Prostate gland (tissue), 2 donors: ENCODE measurements at regions of chr3 and their contacts with region 1.

Region 1: DNA sequence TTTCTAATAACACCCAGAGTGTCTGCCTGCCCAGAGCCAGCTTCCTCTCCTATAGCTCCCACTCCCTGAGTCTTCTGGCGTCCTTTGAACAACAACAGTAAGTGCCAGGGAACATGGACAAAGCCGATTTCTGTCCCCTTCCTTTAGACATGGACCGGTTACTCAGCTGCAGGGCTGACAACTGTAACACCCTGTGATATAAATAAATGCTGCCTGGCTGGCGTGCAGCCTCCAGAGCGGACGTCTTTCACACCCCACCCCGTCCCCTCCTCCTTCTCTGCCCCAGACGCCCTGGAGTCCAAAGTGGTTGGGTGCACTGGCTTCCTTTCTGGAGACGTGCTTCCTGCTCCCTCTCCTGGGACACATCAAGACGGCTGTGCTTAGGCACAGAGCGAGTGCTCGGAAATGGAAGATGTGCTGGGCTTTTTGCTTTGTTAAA is 281.9 kb upstream of the LRRFIP2 start:
- DNase-seq: peak; percentile 35
- H3K4me3 ChIP-seq: no peak overlapping the region
- H3K27ac ChIP-seq: peak overlapping the region; percentile 3 to 7
- H3K4me1 ChIP-seq: no peaks in the 10 kb centered on the region
- H3K27me3 ChIP-seq: no peaks in the 10 kb centered on the region
- CTCF ChIP-seq: peak in 1 of 4 experiments; percentile 9
- POLR2A ChIP-seq: no peak

Region 2: DNA sequence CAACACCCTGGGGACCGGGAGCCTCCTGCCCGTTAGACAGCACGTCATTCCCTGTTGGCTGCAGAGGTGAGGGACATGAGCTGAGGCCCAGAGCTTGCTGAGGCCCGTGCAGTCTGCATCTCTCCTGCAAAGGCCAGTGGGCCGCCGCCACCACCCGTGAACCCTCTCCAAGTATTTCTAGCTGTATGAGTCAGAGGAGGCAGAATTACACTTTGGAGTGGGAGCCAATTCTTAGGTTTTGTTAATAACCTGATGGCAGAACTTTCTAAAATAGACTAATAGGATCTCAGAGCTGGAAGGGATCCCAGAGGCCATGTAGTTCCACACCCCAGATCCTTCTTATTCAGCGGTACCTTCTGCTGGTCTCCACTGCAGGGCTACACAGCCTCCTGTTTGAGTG is 70.2 kb after region 1 on chr3:
- intact Hi-C with region 1: loop called (anchors 5 kb)
- DNase-seq: peak; percentile 50
- H3K4me3 ChIP-seq: no peak overlapping the region
- H3K27ac ChIP-seq: peak overlapping the region in 1 of 2 donors; percentile 20
- H3K4me1 ChIP-seq: no peaks in the 10 kb centered on the region
- H3K27me3 ChIP-seq: no peaks in the 10 kb centered on the region
- CTCF ChIP-seq: no peak
- POLR2A ChIP-seq: no peak